ENCODE measurements at regions of chr2 and their contacts with region 1.

Region 1: DNA sequence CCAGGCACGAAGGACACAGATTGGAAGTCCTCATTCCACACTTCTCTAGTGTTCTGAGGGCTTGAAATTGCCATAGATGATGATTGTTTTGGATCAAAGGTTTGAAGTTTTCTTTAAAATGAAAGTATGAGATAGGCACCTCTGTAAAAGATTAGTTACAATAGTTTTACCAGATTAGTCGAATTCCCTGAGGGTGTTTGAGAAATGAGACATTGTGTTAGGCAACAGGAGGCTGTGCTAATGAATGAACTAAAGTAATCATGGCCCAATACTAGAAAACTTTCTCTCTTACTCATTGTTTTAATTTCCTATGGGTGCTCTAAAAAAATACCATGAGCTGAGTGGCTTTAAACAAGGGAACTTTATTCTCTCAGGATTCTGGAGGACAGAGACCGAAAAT is 421.7 kb downstream of the RNF144A start:
- DNase-seq: no peak
- ATAC-seq: no peak
- H3K4me3 ChIP-seq: no peak overlapping the region
- H3K27ac ChIP-seq: no peak overlapping the region
- H3K4me1 ChIP-seq: no peaks in the 10 kb centered on the region
- H3K27me3 ChIP-seq: no peaks in the 10 kb centered on the region
- CTCF ChIP-seq: no peak

Region 2: GRCh38 chr2:7209757-7210555 is 129.0 kb before region 1 on chr2:
- CTCF ChIA-PET with region 1: no interaction called
- POLR2A ChIA-PET with region 1: no interaction called
- in situ Hi-C with region 1: no loop called
- intact Hi-C with region 1: loop called (anchors 5 kb)
- DNase-seq: no peak
- ATAC-seq: no peak
- H3K4me3 ChIP-seq: no peak overlapping the region
- H3K27ac ChIP-seq: no peak overlapping the region
- H3K4me1 ChIP-seq: no peaks in the 10 kb centered on the region
- H3K27me3 ChIP-seq: no peaks in the 10 kb centered on the region
- CTCF ChIP-seq: no peak